ENCODE measurements at regions of chr1 and their contacts with region 1.

Region 1: DNA sequence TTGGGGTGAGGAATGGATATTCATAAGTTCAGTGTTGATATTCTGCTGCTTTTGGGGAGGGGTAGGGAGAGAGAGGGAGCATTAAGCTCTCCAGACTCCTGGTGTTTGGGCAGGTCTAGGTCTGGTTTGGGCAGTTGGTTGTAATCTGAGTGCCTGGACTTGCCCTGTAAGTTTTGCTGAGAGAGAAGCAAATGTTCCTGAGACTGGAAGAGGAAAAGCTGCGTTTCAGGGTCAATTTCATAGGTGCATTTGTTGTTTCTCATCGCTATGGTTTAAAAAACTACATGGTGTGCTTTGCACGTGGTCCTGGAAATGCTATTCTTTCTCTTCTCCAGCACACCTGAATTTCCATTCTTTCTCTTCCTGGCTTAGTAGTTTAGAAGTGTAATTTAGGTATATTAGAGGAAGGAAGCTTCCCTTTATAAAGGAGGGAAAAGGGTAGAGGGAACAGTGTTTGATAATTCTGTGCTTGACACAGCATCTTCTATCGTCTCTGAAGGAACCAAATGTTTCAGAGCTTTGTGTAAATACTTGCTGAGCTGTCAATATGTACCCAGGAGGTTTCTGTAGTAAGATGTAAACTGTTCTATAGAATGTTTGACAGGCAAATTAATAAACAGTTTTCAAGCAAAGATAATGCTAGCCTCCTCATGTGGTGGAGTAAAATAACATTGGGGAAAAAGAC is 6.3 kb downstream of the ARID1A start:
- DNase-seq: no peak
- H3K4me3 Mint-ChIP-seq: no peak overlapping the region
- H3K27ac Mint-ChIP-seq: no peak overlapping the region
- H3K4me1 Mint-ChIP-seq: peaks cover 25% of the 10 kb centered on the region
- H3K27me3 Mint-ChIP-seq: no peaks in the 10 kb centered on the region

Region 2: GRCh38 chr1:26408604-26409003 is 293.5 kb before region 1 on chr1:
- intact Hi-C with region 1: no loop called
- DNase-seq: peak; percentile 70
- H3K4me3 Mint-ChIP-seq: no peak overlapping the region
- H3K27ac Mint-ChIP-seq: no peak overlapping the region
- H3K4me1 Mint-ChIP-seq: peaks cover 15% of the 10 kb centered on the region
- H3K27me3 Mint-ChIP-seq: peaks cover 55% of the 10 kb centered on the region

Region 3: DNA sequence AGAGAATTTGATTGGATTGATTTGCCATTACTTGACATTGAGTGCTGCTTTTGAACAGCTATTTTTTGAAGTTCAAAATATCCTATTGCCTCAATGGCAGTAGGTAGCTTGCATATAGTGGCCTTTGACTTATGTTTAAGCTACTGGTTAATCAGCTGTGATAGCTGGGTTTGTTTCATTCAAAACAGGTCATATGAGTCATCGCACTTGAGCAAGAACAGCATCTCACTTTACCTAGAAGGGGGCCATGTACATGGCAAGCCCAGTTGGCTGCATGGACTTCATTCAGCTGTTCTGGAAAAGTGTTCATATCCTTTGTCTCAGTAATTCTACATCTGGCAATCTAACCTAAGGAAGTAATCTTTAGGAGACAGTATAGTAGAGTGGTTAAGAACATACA is 35.3 kb before region 1 on chr1:
- intact Hi-C with region 1: no loop called
- DNase-seq: no peak
- H3K4me3 Mint-ChIP-seq: no peak overlapping the region
- H3K27ac Mint-ChIP-seq: no peak overlapping the region
- H3K4me1 Mint-ChIP-seq: peaks cover 7% of the 10 kb centered on the region
- H3K27me3 Mint-ChIP-seq: peaks cover 2% of the 10 kb centered on the region

Region 4: GRCh38 chr1:26721669-26722355 is 19.7 kb after region 1 on chr1:
- intact Hi-C with region 1: loop called (anchors 1 kb)
- DNase-seq: no peak
- H3K4me3 Mint-ChIP-seq: peak overlapping the region; percentile 47
- H3K27ac Mint-ChIP-seq: peak overlapping the region; percentile 70
- H3K4me1 Mint-ChIP-seq: peaks cover 73% of the 10 kb centered on the region
- H3K27me3 Mint-ChIP-seq: no peaks in the 10 kb centered on the region